GM12878 (cell line): ENCODE measurements at regions of chr4 and their contacts with region 1.

Region 1: GRCh38 chr4:14130551-14130950 is 503.0 kb upstream of the BOD1L1 start:
- DNase-seq: no peak
- ATAC-seq: no peak
- H3K4me3 ChIP-seq: no peak overlapping the region
- H3K27ac ChIP-seq: no peak overlapping the region
- H3K4me1 ChIP-seq: peaks cover 3% of the 10 kb centered on the region
- H3K27me3 ChIP-seq: no peaks in the 10 kb centered on the region
- CTCF ChIP-seq: no peak
- EP300 ChIP-seq: no peak
- POLR2A ChIP-seq: no peak
- RAD21 ChIP-seq: no peak

Region 2: DNA sequence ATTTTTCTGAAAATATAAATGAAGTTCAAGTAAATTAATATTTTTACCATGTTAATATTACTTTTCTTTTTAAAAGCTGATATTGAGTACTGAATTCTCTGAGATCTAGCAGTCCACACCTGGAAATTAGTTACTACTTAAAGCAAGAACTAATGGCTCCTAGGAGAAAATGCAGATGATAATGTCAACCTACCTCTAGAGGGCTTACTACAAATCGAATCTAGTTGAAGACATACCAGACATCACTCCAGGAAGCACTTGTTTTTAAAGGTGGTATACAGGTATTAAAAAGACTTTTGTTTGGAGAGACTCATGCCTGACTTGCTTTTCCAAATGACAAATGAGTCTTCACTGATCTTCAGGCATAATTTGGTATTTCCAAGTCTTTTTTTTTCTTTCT is 13.3 kb after region 1 on chr4:
- CTCF ChIA-PET with region 1: interaction called, 14 read pairs
- POLR2A ChIA-PET with region 1: interaction called, 4 read pairs
- RAD21 ChIA-PET with region 1: interaction called, 6 read pairs
- SMC1A ChIA-PET with region 1: interaction called, 6 read pairs
- in situ Hi-C with region 1: no loop called
- intact Hi-C with region 1: no loop called
- DNase-seq: no peak
- ATAC-seq: peak; percentile 62; the same call in 2 of the 3 replicates
- H3K4me3 ChIP-seq: no peak overlapping the region
- H3K27ac ChIP-seq: no peak overlapping the region
- H3K4me1 ChIP-seq: no peaks in the 10 kb centered on the region
- H3K27me3 ChIP-seq: no peaks in the 10 kb centered on the region
- CTCF ChIP-seq: no peak; a peak in 1 of 6 replicates
- EP300 ChIP-seq: no peak
- POLR2A ChIP-seq: no peak
- RAD21 ChIP-seq: 0 out of 2 replicates have a peak, but pooled peaks have one; percentile 19

Region 3: GRCh38 chr4:14196131-14196530 is 65.6 kb after region 1 on chr4:
- CTCF ChIA-PET with region 1: no interaction called
- POLR2A ChIA-PET with region 1: no interaction called
- RAD21 ChIA-PET with region 1: no interaction called
- SMC1A ChIA-PET with region 1: no interaction called
- in situ Hi-C with region 1: no loop called
- intact Hi-C with region 1: no loop called
- DNase-seq: no peak
- ATAC-seq: no peak
- H3K4me3 ChIP-seq: no peak overlapping the region
- H3K27ac ChIP-seq: no peak overlapping the region
- H3K4me1 ChIP-seq: no peaks in the 10 kb centered on the region
- H3K27me3 ChIP-seq: no peaks in the 10 kb centered on the region
- CTCF ChIP-seq: no peak
- EP300 ChIP-seq: no peak
- POLR2A ChIP-seq: no peak
- RAD21 ChIP-seq: no peak

Region 4: DNA sequence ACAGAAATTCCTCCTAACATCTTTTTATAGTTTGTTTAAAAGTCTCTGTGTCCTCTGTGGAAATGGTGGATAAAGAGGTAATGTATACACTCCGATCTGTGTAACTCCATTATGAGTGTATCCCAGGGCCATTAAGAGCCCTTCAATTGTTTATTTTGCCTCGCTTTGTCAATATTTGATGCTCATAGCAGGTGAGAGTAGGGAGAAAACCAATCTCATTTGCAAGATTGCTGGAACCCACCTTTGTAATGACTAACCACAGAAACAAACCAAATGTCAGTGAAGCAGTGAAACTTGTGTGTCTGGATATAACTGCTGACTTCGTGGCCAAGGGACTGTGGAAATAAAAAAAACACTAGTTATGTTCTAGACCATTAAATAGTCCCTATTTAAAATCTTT is 95.2 kb after region 1 on chr4:
- CTCF ChIA-PET with region 1: no interaction called
- POLR2A ChIA-PET with region 1: no interaction called
- RAD21 ChIA-PET with region 1: no interaction called
- SMC1A ChIA-PET with region 1: no interaction called
- in situ Hi-C with region 1: no loop called
- intact Hi-C with region 1: no loop called
- DNase-seq: no peak
- ATAC-seq: peak; percentile 76
- H3K4me3 ChIP-seq: no peak overlapping the region
- H3K27ac ChIP-seq: no peak overlapping the region
- H3K4me1 ChIP-seq: no peaks in the 10 kb centered on the region
- H3K27me3 ChIP-seq: no peaks in the 10 kb centered on the region
- CTCF ChIP-seq: no peak
- EP300 ChIP-seq: no peak
- POLR2A ChIP-seq: no peak
- RAD21 ChIP-seq: no peak

Region 5: GRCh38 chr4:14726441-14727405 is 596.2 kb after region 1 on chr4:
- CTCF ChIA-PET with region 1: no interaction called
- POLR2A ChIA-PET with region 1: no interaction called
- RAD21 ChIA-PET with region 1: no interaction called
- SMC1A ChIA-PET with region 1: no interaction called
- in situ Hi-C with region 1: no loop called
- intact Hi-C with region 1: no loop called
- DNase-seq: no peak
- ATAC-seq: peak; percentile 74
- H3K4me3 ChIP-seq: no peak overlapping the region
- H3K27ac ChIP-seq: no peak overlapping the region
- H3K4me1 ChIP-seq: no peaks in the 10 kb centered on the region
- H3K27me3 ChIP-seq: no peaks in the 10 kb centered on the region
- CTCF ChIP-seq: no peak
- EP300 ChIP-seq: no peak
- POLR2A ChIP-seq: no peak
- RAD21 ChIP-seq: no peak